ENCODE measurements at regions of chr7 and their contacts with region 1.

Region 1: GRCh38 chr7:77696198-77697028 is at the start of gene RSBN1L:
- DNase-seq: peak; percentile 99
- H3K4me3 Mint-ChIP-seq: peak within 1 kb of the TSS; percentile 89
- H3K27ac Mint-ChIP-seq: peak within 1 kb of the TSS; percentile 95
- H3K4me1 Mint-ChIP-seq: peaks cover 51% of the 10 kb centered on the region
- H3K27me3 Mint-ChIP-seq: no peaks in the 10 kb centered on the region
- total RNA-seq, gene RSBN1L: 18.5 to 21.1 TPM

Region 2: GRCh38 chr7:77734659-77735421 is 38.4 kb after region 1 on chr7:
- CTCF ChIA-PET with region 1: no interaction called
- POLR2A ChIA-PET with region 1: no interaction called
- intact Hi-C with region 1: loop called (anchors 5 kb)
- DNase-seq: no peak
- H3K4me3 Mint-ChIP-seq: no peak overlapping the region
- H3K27ac Mint-ChIP-seq: no peak overlapping the region
- H3K4me1 Mint-ChIP-seq: peaks cover 32% of the 10 kb centered on the region
- H3K27me3 Mint-ChIP-seq: no peaks in the 10 kb centered on the region